ENCODE measurements at regions of chr17 and their contacts with region 1.

Region 1: GRCh38 chr17:55601874-55602364 is 90.7 kb upstream of the SMIM36 start:
- DNase-seq: peak; percentile 35 to 61 (median 53)
- H3K4me3 ChIP-seq: no peak overlapping the region
- H3K4me3 Mint-ChIP-seq: no peak overlapping the region
- H3K27ac ChIP-seq: no peak overlapping the region
- H3K27ac Mint-ChIP-seq: no peak overlapping the region
- H3K4me1 ChIP-seq: no peaks in the 10 kb centered on the region
- H3K4me1 Mint-ChIP-seq: no peaks in the 10 kb centered on the region
- H3K27me3 ChIP-seq: no peaks in the 10 kb centered on the region
- H3K27me3 Mint-ChIP-seq: peaks cover 0 to 5% (median 0%) of the 10 kb centered on the region in 3 donors
- CTCF ChIP-seq: peak; percentile 86

Region 2: GRCh38 chr17:55549140-55549539 is 52.8 kb before region 1 on chr17:
- intact Hi-C with region 1: loop called in 1 of 2 experiments (anchors 5 kb)
- DNase-seq: peak in 1 of 3 donors; percentile 20
- H3K4me3 ChIP-seq: no peak overlapping the region
- H3K4me3 Mint-ChIP-seq: no peak overlapping the region
- H3K27ac ChIP-seq: no peak overlapping the region
- H3K27ac Mint-ChIP-seq: no peak overlapping the region
- H3K4me1 ChIP-seq: no peaks in the 10 kb centered on the region
- H3K4me1 Mint-ChIP-seq: peaks cover 3% of the 10 kb centered on the region
- H3K27me3 ChIP-seq: no peaks in the 10 kb centered on the region
- H3K27me3 Mint-ChIP-seq: peaks cover 1 to 4% (median 2%) of the 10 kb centered on the region in 3 donors
- CTCF ChIP-seq: peak; percentile 21